ENCODE measurements at regions of chr4 and their contacts with region 1.

Region 1: GRCh38 chr4:56296526-56296925 is 90.8 kb downstream of the AASDH start:
- DNase-seq: no peak

Region 2: DNA sequence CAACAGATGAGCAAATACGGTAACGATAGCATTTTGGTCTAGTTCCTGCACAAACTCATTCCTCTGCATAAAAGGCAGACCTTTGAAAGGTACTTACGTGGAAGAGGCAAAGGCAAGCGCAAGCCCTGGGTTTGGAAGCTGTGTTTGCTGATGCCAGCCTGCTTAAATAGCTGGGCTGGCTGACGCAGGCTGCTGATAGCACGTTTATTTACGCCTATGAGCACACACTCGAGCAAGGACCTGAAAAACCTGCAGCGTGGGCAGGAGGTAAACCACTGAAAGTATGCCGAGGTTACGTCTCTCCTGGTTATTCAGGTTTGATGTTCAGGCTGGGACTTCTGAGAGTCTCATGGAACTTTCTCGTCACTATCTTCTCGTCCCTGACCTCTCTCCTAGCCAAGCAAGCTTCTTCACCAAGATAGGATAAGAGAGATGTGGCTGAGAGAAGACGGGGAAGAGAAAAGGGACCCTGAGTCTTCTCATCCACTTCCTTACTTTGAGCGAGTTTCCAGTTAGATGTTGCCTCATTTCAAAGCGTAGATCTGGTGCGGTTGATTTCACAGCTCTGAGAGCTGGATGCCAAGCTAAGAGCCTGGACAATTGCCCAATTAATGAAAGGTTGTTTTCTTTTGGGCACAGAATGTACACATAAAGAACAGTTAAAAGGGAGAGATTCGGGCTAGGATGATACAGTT is 384.8 kb after region 1 on chr4 and contains the start of gene HOPX:
- intact Hi-C with region 1: no loop called
- DNase-seq: no peak
- total RNA-seq, gene HOPX: 62.9 to 63.5 TPM

Region 3: DNA sequence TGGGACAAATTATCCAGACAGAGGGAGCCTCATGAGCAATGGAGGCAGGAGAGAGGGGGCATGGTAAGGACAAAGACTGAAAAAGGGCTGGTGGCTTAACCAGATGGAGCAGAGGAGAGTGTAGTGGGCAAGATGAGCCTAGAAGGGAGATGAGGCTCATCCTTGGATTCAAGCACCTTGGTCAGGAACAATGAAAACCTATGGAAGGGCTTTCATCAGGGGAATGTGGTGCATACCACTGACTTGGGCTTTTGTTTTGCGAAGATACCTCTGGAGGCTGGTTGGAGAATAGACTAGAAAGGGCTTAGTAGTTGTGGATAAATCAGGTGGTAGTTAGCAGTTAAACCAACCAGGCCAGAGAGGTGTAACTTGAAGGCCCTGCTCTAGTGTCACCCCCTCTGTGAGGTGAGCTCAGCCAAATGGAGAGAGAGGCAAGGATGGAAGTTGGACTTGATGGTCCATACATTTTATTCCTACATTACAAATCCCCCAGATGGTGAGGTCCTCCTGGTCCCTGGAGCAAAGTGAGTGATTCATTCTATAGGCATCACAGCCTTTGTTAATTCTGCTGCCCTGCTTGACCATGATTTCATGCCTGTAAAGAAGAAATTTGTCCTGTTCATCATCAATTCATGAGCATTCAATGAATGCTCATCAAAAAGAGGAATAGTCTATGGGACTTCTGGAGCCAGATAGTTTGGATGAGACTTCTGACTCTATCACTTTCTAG is 1078.5 kb after region 1 on chr4:
- intact Hi-C with region 1: loop called in 1 of 2 experiments (anchors 5 kb)
- DNase-seq: no peak

Measured in posterior vena cava (tissue), 2 donors.